ENCODE measurements at regions of chr1 and their contacts with region 1.

Region 1: DNA sequence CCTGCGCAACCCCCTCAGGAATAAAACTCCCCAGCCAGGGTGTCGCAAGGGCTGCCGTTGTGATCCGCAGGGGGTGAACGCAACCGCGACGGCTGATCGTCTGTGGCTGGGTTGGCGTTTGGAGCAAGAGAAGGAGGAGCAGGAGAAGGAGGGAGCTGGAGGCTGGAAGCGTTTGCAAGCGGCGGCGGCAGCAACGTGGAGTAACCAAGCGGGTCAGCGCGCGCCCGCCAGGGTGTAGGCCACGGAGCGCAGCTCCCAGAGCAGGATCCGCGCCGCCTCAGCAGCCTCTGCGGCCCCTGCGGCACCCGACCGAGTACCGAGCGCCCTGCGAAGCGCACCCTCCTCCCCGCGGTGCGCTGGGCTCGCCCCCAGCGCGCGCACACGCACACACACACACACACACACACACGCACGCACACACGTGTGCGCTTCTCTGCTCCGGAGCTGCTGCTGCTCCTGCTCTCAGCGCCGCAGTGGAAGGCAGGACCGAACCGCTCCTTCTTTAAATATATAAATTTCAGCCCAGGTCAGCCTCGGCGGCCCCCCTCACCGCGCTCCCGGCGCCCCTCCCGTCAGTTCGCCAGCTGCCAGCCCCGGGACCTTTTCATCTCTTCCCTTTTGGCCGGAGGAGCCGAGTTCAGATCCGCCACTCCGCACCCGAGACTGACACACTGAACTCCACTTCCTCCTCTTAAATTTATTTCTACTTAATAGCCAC is 696 bp downstream of the TGFB2 start:
- DNase-seq: peak; percentile 75
- H3K4me3 ChIP-seq: peak overlapping the region; percentile 77 to 92 (median 81)
- H3K27ac ChIP-seq: peak overlapping the region; percentile 88
- H3K4me1 ChIP-seq: peaks cover 7% of the 10 kb centered on the region
- H3K27me3 ChIP-seq: no peaks in the 10 kb centered on the region
- CTCF ChIP-seq: peak in 1 of 2 donors; percentile 1

Region 2: DNA sequence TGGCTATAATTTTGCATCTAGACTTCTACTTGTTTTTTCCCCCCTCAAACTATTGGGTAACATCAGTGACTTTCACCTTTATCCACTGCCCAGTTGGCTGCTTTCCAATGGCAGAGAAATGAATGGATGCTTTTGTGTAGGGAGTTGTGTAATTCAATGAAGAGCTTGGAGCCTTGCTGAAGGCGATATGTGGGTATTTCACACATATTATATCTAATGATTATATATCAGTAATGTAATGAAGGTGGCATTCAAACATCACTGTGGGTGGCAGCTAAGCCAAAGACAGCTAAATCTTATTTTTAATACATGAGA is 80.5 kb after region 1 on chr1:
- CTCF ChIA-PET with region 1: no interaction called
- dilution Hi-C with region 1: no loop called
- in situ Hi-C with region 1: no loop called
- intact Hi-C with region 1: loop called (anchors 2 kb)
- DNase-seq: peak; percentile 86
- H3K4me3 ChIP-seq: no peak overlapping the region
- H3K27ac ChIP-seq: peak overlapping the region; percentile 57
- H3K4me1 ChIP-seq: peaks cover 31% of the 10 kb centered on the region
- H3K27me3 ChIP-seq: no peaks in the 10 kb centered on the region
- CTCF ChIP-seq: no peak

Region 3: DNA sequence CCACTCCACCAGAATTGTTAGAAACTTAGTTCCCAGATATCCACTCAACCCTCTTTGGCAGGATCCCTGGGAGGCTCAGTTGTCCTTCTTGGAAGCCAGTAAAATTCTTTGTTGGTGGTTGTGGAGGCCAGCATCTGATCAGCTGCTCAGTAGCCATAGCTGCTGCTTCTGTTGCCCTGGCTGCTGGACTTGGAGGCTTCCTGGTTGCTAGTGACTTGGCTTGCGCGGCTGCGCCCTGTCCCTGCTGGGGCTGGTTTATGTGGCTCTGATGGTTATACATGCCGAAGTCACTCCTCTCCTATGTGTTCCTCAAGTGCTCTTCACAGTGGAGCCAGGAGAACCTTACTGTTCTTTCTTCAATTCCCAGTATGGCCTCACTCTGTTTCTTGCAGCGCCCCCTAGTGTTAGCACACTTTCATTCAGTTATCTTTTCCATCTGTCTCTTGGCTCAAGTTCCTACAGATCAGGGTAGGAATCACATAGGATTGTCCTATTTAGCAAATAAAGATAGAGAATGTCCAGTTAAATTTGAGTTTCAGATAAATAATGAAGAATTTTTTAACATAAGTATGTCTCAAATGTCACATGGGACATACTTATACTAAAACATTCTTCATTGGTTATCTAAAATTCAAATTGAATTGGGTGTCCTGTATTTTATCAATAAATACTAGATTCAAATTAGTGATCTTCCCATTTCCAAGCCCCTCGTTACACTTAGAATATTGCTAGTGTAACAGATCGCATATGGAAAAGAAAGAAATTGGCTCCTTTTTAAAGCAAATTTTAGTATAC is 175.7 kb after region 1 on chr1:
- CTCF ChIA-PET with region 1: no interaction called
- dilution Hi-C with region 1: no loop called
- in situ Hi-C with region 1: loop called (anchors 10 to 25 kb)
- intact Hi-C with region 1: loop called (anchors 1 kb)
- DNase-seq: peak; percentile 35
- H3K4me3 ChIP-seq: no peak overlapping the region
- H3K27ac ChIP-seq: no peak overlapping the region
- H3K4me1 ChIP-seq: no peaks in the 10 kb centered on the region
- H3K27me3 ChIP-seq: no peaks in the 10 kb centered on the region
- CTCF ChIP-seq: peak; percentile 61 to 70

Region 4: DNA sequence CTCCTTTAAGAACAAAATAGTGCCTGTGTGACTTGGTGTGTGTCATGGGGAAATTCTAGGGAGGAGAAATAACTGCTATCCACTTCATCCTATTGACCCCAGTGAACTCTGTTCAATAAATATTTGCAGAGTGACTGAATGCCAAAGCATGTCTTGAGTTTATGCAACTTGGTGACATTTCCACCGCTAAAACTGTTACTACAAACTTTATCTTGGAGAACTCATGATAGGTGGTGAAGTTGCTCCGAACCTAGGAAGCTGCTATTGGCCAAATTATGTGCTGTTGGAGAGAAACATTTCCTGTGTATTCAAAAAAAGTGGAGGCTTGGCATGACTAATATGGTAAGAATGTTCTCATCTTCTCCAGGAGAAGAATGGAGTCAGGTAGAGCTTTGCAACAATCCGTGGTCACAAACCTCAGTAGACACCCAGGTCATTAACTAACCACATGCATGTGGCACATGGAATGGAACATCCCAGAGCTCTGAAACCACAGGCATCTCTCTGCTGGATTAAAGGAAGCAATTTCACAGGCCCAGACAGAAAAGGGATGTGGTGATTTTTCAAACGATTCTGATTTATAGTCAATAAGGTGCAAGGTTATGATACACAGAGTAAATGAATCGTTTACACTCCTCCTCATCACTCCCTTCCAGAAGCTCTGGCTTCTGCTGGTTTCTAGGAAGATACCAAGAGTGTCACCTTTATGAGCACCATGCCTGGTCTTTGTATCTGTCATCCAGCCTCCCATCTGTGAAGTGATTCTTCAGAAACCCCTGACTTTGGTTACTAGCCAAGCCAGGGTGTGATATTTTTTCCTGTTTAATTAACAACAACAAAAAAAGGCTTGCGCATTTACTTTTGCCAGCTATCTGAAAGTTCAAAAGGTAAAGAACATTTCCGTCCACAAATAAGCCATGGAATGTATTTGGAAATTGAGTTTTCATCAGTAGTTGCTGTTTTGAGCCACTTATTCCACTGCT is 360.4 kb after region 1 on chr1:
- CTCF ChIA-PET with region 1: no interaction called
- dilution Hi-C with region 1: no loop called
- in situ Hi-C with region 1: loop called in 1 of 2 experiments (anchors 25 kb)
- intact Hi-C with region 1: loop called (anchors 2 kb)
- DNase-seq: peak; percentile 99
- H3K4me3 ChIP-seq: no peak overlapping the region
- H3K27ac ChIP-seq: peak overlapping the region; percentile 98
- H3K4me1 ChIP-seq: peaks cover 39% of the 10 kb centered on the region
- H3K27me3 ChIP-seq: no peaks in the 10 kb centered on the region
- CTCF ChIP-seq: no peak

Region 5: DNA sequence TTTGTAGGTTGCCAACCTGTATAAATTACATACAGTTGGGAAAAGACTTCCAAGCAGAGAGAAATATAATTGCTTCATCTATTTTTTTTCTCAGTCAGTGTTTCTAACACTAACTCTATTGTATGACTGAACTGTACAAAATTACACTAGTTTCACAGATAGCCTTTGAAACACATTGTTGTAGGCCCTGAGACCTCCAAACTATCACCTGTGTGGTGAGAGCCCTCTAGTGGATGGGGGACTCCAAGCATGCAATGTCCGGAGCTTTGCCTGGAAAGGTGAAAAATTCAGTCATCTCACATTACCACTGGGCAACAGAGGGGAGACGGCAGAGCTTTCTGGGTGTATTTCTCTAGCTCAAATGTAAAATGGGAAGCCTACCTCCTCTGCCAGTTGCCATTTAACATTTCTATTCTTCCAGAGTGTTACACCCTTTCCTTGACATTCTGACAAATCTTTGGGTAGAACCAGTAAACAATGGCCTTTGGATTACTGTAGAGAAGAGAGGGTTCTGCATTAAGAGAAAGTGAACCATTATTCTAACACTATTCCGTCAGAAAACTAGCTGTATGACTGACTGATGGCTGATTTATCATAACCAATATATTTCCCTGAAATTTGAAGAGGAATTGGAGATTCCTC is 1040.1 kb after region 1 on chr1:
- CTCF ChIA-PET with region 1: no interaction called
- dilution Hi-C with region 1: no loop called
- in situ Hi-C with region 1: loop called (anchors 25 kb)
- intact Hi-C with region 1: loop called (anchors 5 kb)
- DNase-seq: peak; percentile 48
- H3K4me3 ChIP-seq: no peak overlapping the region
- H3K27ac ChIP-seq: no peak overlapping the region
- H3K4me1 ChIP-seq: no peaks in the 10 kb centered on the region
- H3K27me3 ChIP-seq: no peaks in the 10 kb centered on the region
- CTCF ChIP-seq: peak; percentile 95 to 96